GM10248 (cell line): ENCODE measurements at regions of chr7 and their contacts with region 1.

Region 1: DNA sequence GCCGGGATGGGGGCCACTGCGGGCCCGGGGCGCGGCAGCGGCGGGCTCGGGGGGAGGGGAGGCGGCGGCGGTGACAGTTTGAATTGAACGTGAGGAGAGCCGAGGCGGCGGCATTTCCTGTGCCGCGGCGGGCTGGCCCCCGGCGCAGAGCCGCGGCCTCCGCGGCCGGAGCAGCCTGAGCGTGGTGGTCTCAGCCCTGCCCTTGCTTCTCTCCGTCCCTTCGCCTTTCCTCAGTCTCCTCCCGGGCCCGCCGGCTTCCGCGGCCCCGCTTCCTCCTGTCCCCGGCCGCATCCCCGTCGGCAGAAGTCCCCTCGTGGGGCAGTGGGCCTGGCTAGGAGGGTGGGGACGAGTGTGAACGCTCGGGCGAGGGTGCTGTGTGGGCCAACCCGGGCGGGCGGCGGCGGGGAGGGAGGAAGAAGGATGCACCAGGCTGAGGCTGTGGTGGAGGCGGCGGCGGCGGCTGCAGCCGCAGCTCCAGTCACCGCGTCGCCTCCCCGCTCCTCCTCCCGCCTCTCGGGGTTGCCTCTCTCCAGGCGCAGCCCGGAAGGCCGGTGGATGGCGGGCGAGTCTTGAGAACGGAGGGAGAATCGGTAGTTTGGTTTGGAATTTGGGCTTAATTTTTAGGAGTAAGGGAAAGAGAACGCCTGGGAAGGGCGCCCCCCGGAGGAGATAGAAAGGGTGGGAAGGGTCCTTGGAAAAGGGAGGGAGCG is 690 bp downstream of the SEPTIN7 start:
- DNase-seq: peak; percentile 57
- CTCF ChIP-seq: peak; percentile 31

Region 2: DNA sequence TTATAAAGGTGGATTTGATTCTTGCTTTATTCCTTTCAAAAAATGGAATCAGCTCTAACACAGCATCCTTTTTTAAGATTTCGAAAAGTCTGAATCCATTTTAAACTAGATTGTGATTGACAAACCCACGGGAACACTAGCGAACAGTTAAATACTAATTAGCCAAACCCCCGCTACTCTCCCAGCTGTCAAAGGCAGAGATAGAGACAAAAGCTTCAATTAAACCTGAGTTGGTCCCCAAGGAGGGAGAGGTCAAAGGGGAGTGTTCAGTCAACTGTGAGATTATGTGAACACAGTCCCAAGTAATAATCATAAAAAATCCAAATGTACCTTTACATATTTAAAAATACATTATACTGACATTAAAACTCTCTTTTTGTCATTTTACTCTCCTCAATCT is 481.9 kb before region 1 on chr7:
- CTCF ChIA-PET with region 1: no interaction called
- POLR2A ChIA-PET with region 1: no interaction called
- DNase-seq: no peak
- CTCF ChIP-seq: no peak

Region 3: GRCh38 chr7:35624299-35625186 is 177.0 kb before region 1 on chr7:
- CTCF ChIA-PET with region 1: no interaction called
- POLR2A ChIA-PET with region 1: no interaction called
- DNase-seq: peak; percentile 70
- CTCF ChIP-seq: peak; percentile 80

Region 4: DNA sequence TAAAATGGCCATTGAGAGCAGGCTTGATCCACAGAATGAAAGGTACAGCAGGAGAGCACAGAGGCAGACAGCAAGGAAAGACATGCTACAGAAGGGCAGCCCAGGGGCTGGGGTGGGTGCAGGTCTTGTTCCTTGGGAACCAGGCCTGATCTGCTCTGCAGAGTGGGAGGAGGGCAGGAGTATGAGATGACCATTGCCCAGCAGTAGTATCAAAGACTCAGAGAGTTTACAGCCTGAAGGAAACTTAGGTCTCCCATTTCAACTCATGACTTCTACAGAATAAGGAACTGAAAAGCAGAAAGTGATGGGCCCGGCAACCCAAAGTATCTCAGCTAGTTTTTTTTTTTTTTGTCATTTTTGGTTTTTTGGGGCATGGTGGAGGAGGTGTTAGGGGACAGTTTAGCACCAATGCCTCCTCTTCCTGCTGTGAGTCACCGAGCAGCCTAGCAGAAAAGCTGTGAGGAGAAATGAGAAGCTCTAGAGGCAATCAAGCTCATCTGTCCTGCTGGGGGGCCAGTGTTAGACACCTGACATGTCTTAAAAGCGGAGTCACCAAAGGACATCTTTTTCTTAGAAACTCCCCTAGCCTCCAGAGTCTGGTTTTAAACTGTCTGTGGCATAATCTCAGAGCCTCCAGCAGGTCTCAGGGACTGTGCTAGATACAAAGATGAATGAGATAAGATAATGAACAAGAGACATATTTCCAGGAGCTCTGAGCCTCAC is 72.3 kb before region 1 on chr7:
- CTCF ChIA-PET with region 1: interaction called, 14 read pairs
- POLR2A ChIA-PET with region 1: interaction called, 58 read pairs
- DNase-seq: peak; percentile 67
- CTCF ChIP-seq: no peak